Caco-2 (cell line): ENCODE measurements at regions of chr5 and their contacts with region 1.

Region 1: DNA sequence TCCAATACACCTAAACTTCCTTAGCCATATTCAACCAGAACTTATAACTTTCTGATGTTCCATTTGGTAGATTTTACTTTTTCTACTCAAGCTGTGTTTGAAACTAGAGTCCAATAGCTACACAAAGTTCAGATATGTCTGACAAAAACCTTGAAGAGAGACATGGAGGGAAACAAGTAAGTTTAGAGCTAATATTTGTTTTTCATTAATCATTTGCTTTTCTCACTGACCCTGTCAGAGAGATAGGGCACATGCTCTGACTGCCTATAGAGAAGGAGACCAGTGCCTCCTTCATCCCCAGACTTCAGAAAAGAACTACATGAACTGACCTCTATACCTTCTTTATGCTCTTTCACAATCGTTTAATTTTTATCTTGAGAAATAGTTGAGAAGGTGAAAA is 157.0 kb upstream of the PPP1R2B start:
- DNase-seq: peak; percentile 43 to 44
- H3K4me3 ChIP-seq: no peak overlapping the region
- H3K4me3 Mint-ChIP-seq: peak overlapping the region; percentile 64
- H3K27ac Mint-ChIP-seq: peak overlapping the region; percentile 71
- H3K4me1 ChIP-seq: peaks cover 22% of the 10 kb centered on the region
- H3K4me1 Mint-ChIP-seq: peaks cover 16% of the 10 kb centered on the region
- H3K27me3 ChIP-seq: no peaks in the 10 kb centered on the region; the same call in 1 of the 2 replicates
- H3K27me3 Mint-ChIP-seq: no peaks in the 10 kb centered on the region
- CTCF ChIP-seq: peak in 1 of 2 experiments; percentile 2

Region 2: DNA sequence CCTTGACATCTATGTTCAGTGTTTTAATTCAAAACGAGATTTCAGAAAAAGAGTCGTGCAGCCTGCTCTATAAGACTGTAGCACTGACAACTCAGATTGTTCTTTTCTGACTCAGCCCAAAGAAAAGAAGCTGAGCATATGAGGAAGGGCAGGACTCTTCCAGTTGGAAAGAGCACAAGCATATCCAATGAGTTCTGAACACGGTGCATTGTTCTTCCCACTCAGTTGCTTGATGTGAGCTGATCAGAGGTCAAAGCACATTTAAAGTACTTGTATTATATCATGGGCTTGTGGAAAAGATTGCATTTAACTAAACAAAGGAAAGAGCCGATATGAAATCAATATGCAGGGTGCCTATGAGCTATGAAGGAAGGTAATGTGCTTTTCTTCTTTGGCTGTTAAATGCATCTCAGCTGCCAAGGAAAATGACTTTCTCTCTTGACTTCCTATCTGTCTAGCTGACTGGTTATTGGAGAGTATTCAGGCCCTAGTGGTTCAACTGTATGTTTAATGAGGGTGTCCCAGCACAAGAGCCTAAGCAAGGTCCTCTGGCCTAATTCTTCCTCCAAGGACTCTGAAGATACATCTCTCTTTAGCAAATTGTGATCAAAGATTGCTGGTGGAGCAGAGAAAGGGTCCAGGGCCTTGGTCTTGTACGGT is 69.6 kb before region 1 on chr5:
- CTCF ChIA-PET with region 1: no interaction called
- POLR2A ChIA-PET with region 1: no interaction called
- intact Hi-C with region 1: no loop called
- DNase-seq: no peak
- H3K4me3 ChIP-seq: no peak overlapping the region
- H3K4me3 Mint-ChIP-seq: no peak overlapping the region
- H3K27ac Mint-ChIP-seq: no peak overlapping the region
- H3K4me1 ChIP-seq: no peaks in the 10 kb centered on the region
- H3K4me1 Mint-ChIP-seq: no peaks in the 10 kb centered on the region
- H3K27me3 ChIP-seq: no peaks in the 10 kb centered on the region
- H3K27me3 Mint-ChIP-seq: peaks cover 3% of the 10 kb centered on the region
- CTCF ChIP-seq: no peak

Region 3: DNA sequence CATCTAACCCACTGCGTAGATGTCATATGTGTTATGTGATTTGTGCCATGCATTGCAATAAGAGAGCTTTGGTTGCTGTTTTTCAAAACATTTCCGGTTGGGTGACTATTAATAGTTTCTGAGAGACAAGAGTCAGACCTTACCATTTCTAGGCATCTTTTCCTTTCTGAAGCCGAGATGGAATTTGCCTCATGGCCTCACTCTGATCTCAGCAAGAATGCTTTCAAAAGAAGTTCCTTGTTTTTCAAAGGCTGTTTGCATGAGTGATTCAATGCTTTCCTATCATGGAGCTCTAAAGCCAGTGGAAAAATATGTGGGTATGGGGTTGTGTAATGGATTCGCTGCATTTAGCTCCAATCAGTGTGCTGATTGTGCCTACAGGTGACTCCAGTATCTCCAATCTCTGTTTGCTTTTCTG is 46.1 kb before region 1 on chr5:
- CTCF ChIA-PET with region 1: no interaction called
- POLR2A ChIA-PET with region 1: no interaction called
- intact Hi-C with region 1: loop called (anchors 1 kb)
- DNase-seq: peak; percentile 57 to 73
- H3K4me3 ChIP-seq: no peak overlapping the region
- H3K4me3 Mint-ChIP-seq: peak overlapping the region; percentile 34
- H3K27ac Mint-ChIP-seq: peak overlapping the region; percentile 74
- H3K4me1 ChIP-seq: peaks cover 30% of the 10 kb centered on the region
- H3K4me1 Mint-ChIP-seq: peaks cover 31% of the 10 kb centered on the region
- H3K27me3 ChIP-seq: no peaks in the 10 kb centered on the region
- H3K27me3 Mint-ChIP-seq: no peaks in the 10 kb centered on the region
- CTCF ChIP-seq: no peak

Region 4: GRCh38 chr5:156675395-156675794 is 17.7 kb before region 1 on chr5:
- CTCF ChIA-PET with region 1: no interaction called
- POLR2A ChIA-PET with region 1: no interaction called
- intact Hi-C with region 1: loop called (anchors 2 kb)
- DNase-seq: no peak
- H3K4me3 ChIP-seq: no peak overlapping the region
- H3K4me3 Mint-ChIP-seq: no peak overlapping the region
- H3K27ac Mint-ChIP-seq: no peak overlapping the region
- H3K4me1 ChIP-seq: peaks cover 7% of the 10 kb centered on the region; the same call in 1 of the 2 replicates
- H3K4me1 Mint-ChIP-seq: no peaks in the 10 kb centered on the region
- H3K27me3 ChIP-seq: no peaks in the 10 kb centered on the region
- H3K27me3 Mint-ChIP-seq: no peaks in the 10 kb centered on the region
- CTCF ChIP-seq: no peak

Region 5: GRCh38 chr5:157142317-157143126 is 449.4 kb after region 1 on chr5 and contains the start of gene MED7:
- CTCF ChIA-PET with region 1: no interaction called
- POLR2A ChIA-PET with region 1: no interaction called
- intact Hi-C with region 1: loop called (anchors 1 kb)
- DNase-seq: peak; percentile 97 to 98
- H3K4me3 ChIP-seq: peak within 1 kb of the TSS; percentile 82
- H3K4me3 Mint-ChIP-seq: peak within 1 kb of the TSS; percentile 96
- H3K27ac Mint-ChIP-seq: peak within 1 kb of the TSS; percentile 98
- H3K4me1 ChIP-seq: no peaks in the 10 kb centered on the region
- H3K4me1 Mint-ChIP-seq: peaks cover 8% of the 10 kb centered on the region
- H3K27me3 ChIP-seq: no peaks in the 10 kb centered on the region
- H3K27me3 Mint-ChIP-seq: no peaks in the 10 kb centered on the region
- CTCF ChIP-seq: no peak
- total RNA-seq, gene MED7: 14.6 and 17.3 TPM in 2 replicates